Endothelial cell of umbilical vein (primary cell): ENCODE measurements at regions of chr10 and their contacts with region 1.

Region 1: GRCh38 chr10:48363617-48364355 is 57.3 kb downstream of the MAPK8 start:
- DNase-seq: peak; percentile 90
- H3K4me3 ChIP-seq: peak overlapping the region in 1 of 3 experiments; percentile 46
- H3K27ac ChIP-seq: peak overlapping the region; percentile 77
- H3K4me1 ChIP-seq: peaks cover 41% of the 10 kb centered on the region
- H3K27me3 ChIP-seq: no peaks in the 10 kb centered on the region
- CTCF ChIP-seq: peak; percentile 45 to 47
- POLR2A ChIP-seq: no peak

Region 2: GRCh38 chr10:48383388-48383787 is 19.6 kb after region 1 on chr10:
- CTCF ChIA-PET with region 1: interaction called, 12 read pairs
- POLR2A ChIA-PET with region 1: interaction called, 5 read pairs
- dilution Hi-C with region 1: no loop called
- intact Hi-C with region 1: no loop called
- DNase-seq: no peak
- H3K4me3 ChIP-seq: no peak overlapping the region
- H3K27ac ChIP-seq: no peak overlapping the region
- H3K4me1 ChIP-seq: peaks cover 6% of the 10 kb centered on the region
- H3K27me3 ChIP-seq: no peaks in the 10 kb centered on the region
- CTCF ChIP-seq: no peak
- POLR2A ChIP-seq: no peak

Region 3: GRCh38 chr10:48416584-48417232 is 52.9 kb after region 1 on chr10:
- CTCF ChIA-PET with region 1: interaction called, 11 read pairs
- POLR2A ChIA-PET with region 1: no interaction called
- dilution Hi-C with region 1: no loop called
- intact Hi-C with region 1: no loop called
- DNase-seq: no peak
- H3K4me3 ChIP-seq: no peak overlapping the region
- H3K27ac ChIP-seq: no peak overlapping the region
- H3K4me1 ChIP-seq: no peaks in the 10 kb centered on the region
- H3K27me3 ChIP-seq: no peaks in the 10 kb centered on the region
- CTCF ChIP-seq: no peak
- POLR2A ChIP-seq: no peak

Region 4: DNA sequence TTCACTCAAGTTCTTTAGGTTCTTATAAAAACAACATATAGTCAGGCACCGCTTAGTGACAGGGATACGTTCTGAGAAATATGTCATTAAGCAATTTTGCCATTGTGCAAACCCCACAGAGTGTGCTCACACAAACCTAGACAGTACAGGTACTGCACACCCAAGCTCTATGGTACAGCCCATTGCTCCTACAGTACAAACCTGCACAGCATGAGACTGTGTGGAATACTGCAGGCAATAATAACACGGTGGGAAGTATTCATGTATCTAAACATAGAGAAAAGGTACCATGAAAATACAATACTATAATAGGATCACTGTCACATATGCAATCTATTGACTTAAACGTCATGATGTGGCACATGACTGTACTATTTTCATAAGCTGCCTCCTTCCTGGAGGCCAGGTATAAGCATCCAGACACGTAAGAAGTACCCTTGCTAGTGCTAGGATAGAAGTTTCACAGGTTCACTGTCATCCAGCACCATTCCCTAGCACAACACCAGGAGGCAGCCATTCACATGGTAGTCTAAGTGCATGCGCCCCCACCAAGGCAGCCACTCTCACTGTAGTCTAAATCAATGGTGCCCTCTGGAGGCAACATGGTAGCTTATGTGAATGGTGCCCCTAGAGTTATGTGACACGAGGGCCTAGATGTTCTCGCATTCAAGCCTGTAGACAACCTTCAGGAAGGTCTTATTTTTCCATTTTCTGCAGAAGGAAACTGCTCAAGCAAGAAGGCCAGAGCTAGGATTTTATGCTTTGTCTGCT is 142.5 kb after region 1 on chr10:
- CTCF ChIA-PET with region 1: interaction called, 145 read pairs
- POLR2A ChIA-PET with region 1: interaction called, 4 read pairs
- dilution Hi-C with region 1: no loop called
- intact Hi-C with region 1: loop called (anchors 1 kb)
- DNase-seq: peak; percentile 67
- H3K4me3 ChIP-seq: no peak overlapping the region
- H3K27ac ChIP-seq: no peak overlapping the region
- H3K4me1 ChIP-seq: peaks cover 19% of the 10 kb centered on the region
- H3K27me3 ChIP-seq: no peaks in the 10 kb centered on the region
- CTCF ChIP-seq: peak; percentile 36 to 53
- POLR2A ChIP-seq: no peak

Region 5: GRCh38 chr10:48608279-48608681 is 244.5 kb after region 1 on chr10:
- CTCF ChIA-PET with region 1: interaction called, 23 read pairs
- POLR2A ChIA-PET with region 1: no interaction called
- dilution Hi-C with region 1: no loop called
- intact Hi-C with region 1: loop called (anchors 1 kb)
- DNase-seq: no peak
- H3K4me3 ChIP-seq: no peak overlapping the region
- H3K27ac ChIP-seq: peak overlapping the region; percentile 95
- H3K4me1 ChIP-seq: peaks cover 59% of the 10 kb centered on the region
- H3K27me3 ChIP-seq: no peaks in the 10 kb centered on the region
- CTCF ChIP-seq: peak; percentile 74 to 75
- POLR2A ChIP-seq: no peak

Region 6: GRCh38 chr10:48811461-48811860 is 447.7 kb after region 1 on chr10:
- CTCF ChIA-PET with region 1: no interaction called
- POLR2A ChIA-PET with region 1: no interaction called
- dilution Hi-C with region 1: no loop called
- intact Hi-C with region 1: no loop called
- DNase-seq: no peak
- H3K4me3 ChIP-seq: no peak overlapping the region
- H3K27ac ChIP-seq: no peak overlapping the region
- H3K4me1 ChIP-seq: no peaks in the 10 kb centered on the region
- H3K27me3 ChIP-seq: no peaks in the 10 kb centered on the region
- CTCF ChIP-seq: no peak
- POLR2A ChIP-seq: no peak